Activated naive CD4-positive, alpha-beta T cell treated with anti-CD3 and anti-CD28 coated beads for 36 hours (primary cell): ENCODE measurements at regions of chr17 and their contacts with region 1.

Region 1: GRCh38 chr17:55421179-55421934 is at the start of gene MMD:
- DNase-seq: no peak
- H3K4me3 Mint-ChIP-seq: peak within 1 kb of the TSS; percentile 89
- H3K27ac Mint-ChIP-seq: peak within 1 kb of the TSS; percentile 89
- H3K4me1 Mint-ChIP-seq: peaks cover 40% of the 10 kb centered on the region
- H3K27me3 Mint-ChIP-seq: peaks cover 24% of the 10 kb centered on the region
- total RNA-seq, gene MMD: 26.2 to 27.7 TPM

Region 2: DNA sequence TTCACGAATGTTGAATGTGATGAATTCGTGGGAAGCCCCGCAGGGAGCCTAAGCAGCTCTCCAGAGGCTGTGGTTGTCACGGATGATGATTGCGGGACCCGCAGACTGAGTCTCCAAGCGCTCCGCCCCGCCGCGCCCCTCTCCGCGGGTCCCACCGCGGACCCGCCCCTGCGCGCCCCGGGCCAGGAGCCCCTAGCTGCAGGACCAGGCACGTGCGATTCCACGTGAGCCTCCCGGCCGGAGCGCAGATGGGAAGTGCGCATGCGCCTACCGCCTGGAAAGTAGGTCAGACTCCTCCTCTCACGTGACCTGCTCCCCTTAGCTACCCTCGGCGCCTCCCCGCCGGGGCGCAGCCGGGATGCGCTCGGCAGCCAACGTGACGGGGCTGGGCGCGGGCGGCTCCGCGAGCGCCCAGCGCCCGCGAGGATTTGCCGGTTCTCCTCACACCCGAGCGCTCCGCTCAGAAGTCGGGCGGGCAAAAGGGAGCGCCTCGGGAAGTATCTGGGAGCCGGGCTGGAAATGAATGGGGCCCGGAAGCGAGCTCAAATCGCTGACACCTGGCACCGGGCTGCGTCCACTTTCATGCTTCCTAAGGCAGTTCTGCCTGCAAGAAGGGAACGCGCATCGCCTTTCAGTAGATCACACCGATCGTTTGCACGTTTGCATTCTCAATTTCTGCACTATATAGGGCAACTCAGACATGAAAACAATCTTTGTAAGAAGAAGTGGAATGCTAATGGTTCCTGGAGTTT is 183.0 kb before region 1 on chr17:
- CTCF ChIA-PET with region 1: no interaction called
- intact Hi-C with region 1: loop called (anchors 1 kb)
- DNase-seq: peak; percentile 85
- H3K4me3 Mint-ChIP-seq: peak overlapping the region; percentile 77
- H3K27ac Mint-ChIP-seq: no peak overlapping the region
- H3K4me1 Mint-ChIP-seq: peaks cover 9% of the 10 kb centered on the region
- H3K27me3 Mint-ChIP-seq: peaks cover 24% of the 10 kb centered on the region

Region 3: GRCh38 chr17:55366020-55366481 is 55.3 kb before region 1 on chr17:
- CTCF ChIA-PET with region 1: no interaction called
- intact Hi-C with region 1: no loop called
- DNase-seq: no peak
- H3K4me3 Mint-ChIP-seq: no peak overlapping the region
- H3K27ac Mint-ChIP-seq: no peak overlapping the region
- H3K4me1 Mint-ChIP-seq: peaks cover 2% of the 10 kb centered on the region
- H3K27me3 Mint-ChIP-seq: peaks cover 4% of the 10 kb centered on the region

Region 4: GRCh38 chr17:55437159-55437605 is 15.8 kb after region 1 on chr17:
- CTCF ChIA-PET with region 1: interaction called, 3 read pairs
- intact Hi-C with region 1: loop called (anchors 1 kb)
- DNase-seq: no peak
- H3K4me3 Mint-ChIP-seq: no peak overlapping the region
- H3K27ac Mint-ChIP-seq: no peak overlapping the region
- H3K4me1 Mint-ChIP-seq: peaks cover 31% of the 10 kb centered on the region
- H3K27me3 Mint-ChIP-seq: peaks cover 4% of the 10 kb centered on the region

Region 5: GRCh38 chr17:55576996-55577586 is 155.7 kb after region 1 on chr17:
- CTCF ChIA-PET with region 1: no interaction called
- intact Hi-C with region 1: loop called (anchors 2 kb)
- DNase-seq: peak; percentile 77
- H3K4me3 Mint-ChIP-seq: no peak overlapping the region
- H3K27ac Mint-ChIP-seq: no peak overlapping the region
- H3K4me1 Mint-ChIP-seq: peaks cover 29% of the 10 kb centered on the region
- H3K27me3 Mint-ChIP-seq: no peaks in the 10 kb centered on the region

Region 6: GRCh38 chr17:56592487-56593085 is 1171.2 kb after region 1 on chr17:
- CTCF ChIA-PET with region 1: no interaction called
- intact Hi-C with region 1: loop called (anchors 2 kb)
- DNase-seq: peak; percentile 66
- H3K4me3 Mint-ChIP-seq: peak overlapping the region; percentile 79
- H3K27ac Mint-ChIP-seq: no peak overlapping the region
- H3K4me1 Mint-ChIP-seq: peaks cover 17% of the 10 kb centered on the region
- H3K27me3 Mint-ChIP-seq: no peaks in the 10 kb centered on the region